ENCODE measurements at regions of chr20 and their contacts with region 1.

Region 1: GRCh38 chr20:40689943-40690835 is 1.2 kb upstream of the MAFB start:
- DNase-seq: peak; percentile 90
- H3K4me3 ChIP-seq: peak overlapping the region; percentile 59
- H3K27ac ChIP-seq: peak overlapping the region; percentile 79
- H3K4me1 ChIP-seq: peaks cover 11% of the 10 kb centered on the region
- H3K27me3 ChIP-seq: peaks cover 71% of the 10 kb centered on the region
- CTCF ChIP-seq: peak; percentile 91

Region 2: DNA sequence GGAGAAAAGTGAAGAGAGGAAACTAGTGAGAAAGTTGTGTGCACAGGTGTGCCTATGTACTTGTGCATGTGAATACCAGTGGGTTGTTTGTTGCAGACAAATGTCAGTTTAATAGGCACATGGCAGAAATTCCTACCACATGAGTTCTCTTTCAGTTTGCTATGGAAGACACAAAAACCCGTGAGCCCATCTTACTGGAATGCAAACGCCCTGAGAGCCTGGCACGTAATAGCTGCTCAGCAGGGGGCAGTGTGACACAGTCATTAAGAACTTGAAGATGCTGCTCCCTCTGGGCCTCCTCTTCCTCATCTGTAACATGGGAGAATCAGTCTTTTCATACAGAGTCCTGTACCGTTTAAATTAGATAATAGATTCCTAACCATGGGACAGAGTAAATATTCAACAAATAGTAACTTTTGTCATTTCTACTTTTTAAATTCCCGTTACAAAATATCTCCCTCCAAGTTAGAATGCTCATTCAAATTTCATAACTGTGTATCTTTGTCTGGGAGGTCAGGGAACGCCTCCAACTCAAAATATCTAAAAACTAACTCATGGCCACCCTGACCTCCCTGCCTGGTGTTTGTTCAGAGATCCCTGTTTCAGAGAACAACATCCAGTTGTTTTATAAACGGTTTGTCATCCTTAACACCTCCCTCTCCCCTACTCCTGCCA is 804.1 kb before region 1 on chr20:
- intact Hi-C with region 1: loop called (anchors 10 kb)
- DNase-seq: peak; percentile 54
- H3K4me3 ChIP-seq: no peak overlapping the region
- H3K27ac ChIP-seq: no peak overlapping the region
- H3K4me1 ChIP-seq: no peaks in the 10 kb centered on the region
- H3K27me3 ChIP-seq: no peaks in the 10 kb centered on the region
- CTCF ChIP-seq: peak; percentile 38

Region 3: GRCh38 chr20:40073535-40074111 is 616.6 kb before region 1 on chr20:
- intact Hi-C with region 1: no loop called
- DNase-seq: no peak
- H3K4me3 ChIP-seq: no peak overlapping the region
- H3K27ac ChIP-seq: no peak overlapping the region
- H3K4me1 ChIP-seq: no peaks in the 10 kb centered on the region
- H3K27me3 ChIP-seq: no peaks in the 10 kb centered on the region
- CTCF ChIP-seq: no peak

Region 4: DNA sequence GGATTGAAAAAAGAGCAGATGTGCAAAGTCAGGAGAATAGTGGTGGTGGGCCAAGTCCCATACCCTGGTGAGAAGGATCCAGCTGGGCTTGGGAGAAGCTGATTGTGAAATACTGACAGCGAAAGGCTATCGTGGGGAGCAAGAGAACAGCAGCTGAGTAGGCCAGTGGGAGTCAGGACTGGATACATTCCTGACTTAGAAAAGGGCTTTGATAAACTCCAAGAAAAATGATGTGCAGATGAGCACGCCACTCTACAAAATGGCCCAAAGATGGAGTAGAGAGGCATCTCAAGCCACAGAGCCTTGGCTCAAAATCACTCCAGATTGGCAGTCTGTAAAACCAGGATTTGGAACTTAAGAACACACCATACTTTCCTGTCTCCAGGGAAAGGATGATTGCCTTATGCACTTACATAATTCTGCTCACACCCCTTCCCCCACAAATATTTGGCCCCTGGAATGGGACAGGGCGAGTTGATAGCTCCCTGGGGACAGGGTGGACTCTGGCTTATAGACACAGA is 579.8 kb before region 1 on chr20:
- intact Hi-C with region 1: no loop called
- DNase-seq: no peak
- H3K4me3 ChIP-seq: no peak overlapping the region
- H3K27ac ChIP-seq: no peak overlapping the region
- H3K4me1 ChIP-seq: no peaks in the 10 kb centered on the region
- H3K27me3 ChIP-seq: no peaks in the 10 kb centered on the region
- CTCF ChIP-seq: no peak

Region 5: DNA sequence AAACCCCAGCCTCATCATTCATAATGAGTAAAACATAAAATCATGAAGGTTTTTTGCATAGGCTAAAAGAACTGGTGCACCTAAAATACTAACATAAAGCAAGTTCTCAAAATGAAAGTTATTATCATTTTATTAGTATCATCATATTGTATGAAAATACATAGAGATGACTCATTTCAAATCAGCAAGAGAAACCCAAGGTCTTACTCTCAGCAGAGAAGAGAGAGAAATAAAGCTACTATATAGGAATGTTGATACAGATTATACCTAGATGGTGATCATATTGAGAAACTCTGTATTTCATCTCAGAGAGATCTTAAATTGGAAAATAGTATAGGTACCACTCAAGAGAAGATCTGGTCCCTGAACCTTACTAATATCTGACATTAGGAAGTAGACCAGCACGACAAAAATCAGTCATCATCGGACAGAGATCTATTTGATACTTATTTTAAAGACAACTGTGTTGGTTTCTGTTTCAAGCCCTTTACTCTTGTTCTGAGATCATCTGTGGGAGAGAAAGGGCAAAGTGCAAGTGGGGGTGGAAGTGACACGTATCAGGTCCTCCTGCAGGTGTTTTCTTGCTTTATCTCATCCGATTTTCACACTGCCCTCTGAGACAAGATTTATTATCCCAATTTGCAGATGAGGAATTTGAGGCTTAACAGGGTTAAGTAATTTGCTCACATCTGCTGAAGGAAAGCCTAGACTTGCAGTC is 533.4 kb before region 1 on chr20:
- intact Hi-C with region 1: loop called (anchors 10 kb)
- DNase-seq: no peak
- H3K4me3 ChIP-seq: no peak overlapping the region
- H3K27ac ChIP-seq: no peak overlapping the region
- H3K4me1 ChIP-seq: no peaks in the 10 kb centered on the region
- H3K27me3 ChIP-seq: no peaks in the 10 kb centered on the region
- CTCF ChIP-seq: no peak

Region 6: DNA sequence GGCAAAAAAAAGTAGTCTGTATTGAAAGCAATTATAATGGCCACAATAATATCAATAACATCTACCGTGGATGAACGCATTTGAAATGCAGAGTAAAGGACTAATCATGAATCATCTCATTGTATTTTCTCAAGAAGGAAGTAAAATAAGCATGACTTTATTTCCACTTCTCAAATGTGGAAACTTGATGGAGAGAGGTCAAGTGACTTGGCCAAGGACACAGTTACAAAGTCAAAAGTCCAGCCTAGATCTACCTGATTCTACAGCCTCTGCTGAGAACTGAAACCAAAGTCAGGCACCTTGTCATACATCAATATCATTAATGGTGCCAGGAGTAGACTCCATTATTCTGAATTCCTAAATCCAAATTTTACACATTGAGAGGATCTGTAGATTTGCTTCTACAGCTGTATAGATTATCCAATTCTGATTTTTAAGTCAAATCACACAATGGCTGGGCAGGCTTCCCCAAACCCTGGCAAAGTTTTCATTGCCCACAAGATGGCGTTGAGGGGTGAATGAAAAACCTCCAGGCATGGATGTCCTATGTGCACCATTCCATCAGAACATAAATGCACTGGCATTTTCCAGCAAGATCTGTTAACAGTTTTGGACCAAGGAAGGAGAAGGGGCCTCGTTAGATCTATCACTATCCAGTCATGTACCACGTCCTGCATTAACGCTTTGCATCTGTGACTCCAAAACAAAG is 424.2 kb before region 1 on chr20:
- intact Hi-C with region 1: loop called (anchors 5 kb)
- DNase-seq: peak; percentile 41
- H3K4me3 ChIP-seq: no peak overlapping the region
- H3K27ac ChIP-seq: no peak overlapping the region
- H3K4me1 ChIP-seq: no peaks in the 10 kb centered on the region
- H3K27me3 ChIP-seq: no peaks in the 10 kb centered on the region
- CTCF ChIP-seq: peak; percentile 39